PC-9 (cell line): ENCODE measurements at regions of chr12 and their contacts with region 1.

Region 1: DNA sequence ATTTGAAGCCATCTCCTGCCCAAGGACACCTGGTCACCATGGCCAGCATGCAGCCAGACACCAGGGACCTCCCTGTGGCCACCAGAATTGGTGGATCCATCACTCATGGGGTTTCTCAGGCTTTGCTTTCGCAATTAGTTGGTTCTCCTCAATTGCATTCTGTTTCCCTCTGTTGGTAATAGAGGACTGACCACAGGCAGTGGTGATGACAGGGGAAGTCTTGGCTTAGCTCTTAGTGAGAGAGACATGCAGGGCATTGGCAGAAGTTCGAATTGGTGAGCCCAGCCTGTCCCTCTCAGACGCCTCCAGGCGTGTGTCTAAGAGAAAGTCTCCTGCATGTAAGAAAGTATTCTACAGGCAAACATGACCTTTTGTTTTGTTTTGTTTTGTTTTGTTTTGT is 21.3 kb downstream of the HCAR2 start:
- DNase-seq: peak in 1 of 2 experiments; percentile 40
- H3K4me3 ChIP-seq: no peak overlapping the region
- H3K27ac ChIP-seq: no peak overlapping the region
- H3K4me1 ChIP-seq: peaks cover 42% of the 10 kb centered on the region
- H3K27me3 ChIP-seq: no peaks in the 10 kb centered on the region
- CTCF ChIP-seq: no peak

Region 2: DNA sequence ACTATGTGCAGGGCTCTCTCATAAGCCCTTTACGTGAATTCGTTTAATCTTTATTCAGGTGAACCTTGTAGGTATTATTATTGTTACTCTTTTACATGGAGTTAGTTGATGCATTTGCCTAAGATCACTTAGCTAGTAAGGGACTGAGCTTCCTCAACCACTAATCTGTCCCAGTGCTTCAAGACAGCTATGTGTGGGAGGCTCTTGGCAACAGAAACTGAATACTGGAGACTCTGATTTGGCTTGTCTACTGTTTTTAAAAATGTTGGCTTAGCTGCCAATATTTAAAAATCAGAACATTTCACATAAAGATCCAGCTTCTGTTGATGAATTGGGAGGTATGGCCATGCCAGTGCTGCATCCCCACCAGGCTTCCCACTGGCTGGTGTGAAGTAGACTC is 148.0 kb before region 1 on chr12:
- CTCF ChIA-PET with region 1: no interaction called
- POLR2A ChIA-PET with region 1: no interaction called
- intact Hi-C with region 1: no loop called
- DNase-seq: no peak
- H3K4me3 ChIP-seq: no peak overlapping the region
- H3K27ac ChIP-seq: no peak overlapping the region
- H3K4me1 ChIP-seq: no peaks in the 10 kb centered on the region
- H3K27me3 ChIP-seq: no peaks in the 10 kb centered on the region
- CTCF ChIP-seq: no peak

Region 3: GRCh38 chr12:122642009-122642408 is 39.8 kb before region 1 on chr12:
- CTCF ChIA-PET with region 1: interaction called, 3 read pairs
- POLR2A ChIA-PET with region 1: no interaction called
- intact Hi-C with region 1: loop called (anchors 1 kb)
- DNase-seq: no peak
- H3K4me3 ChIP-seq: no peak overlapping the region
- H3K27ac ChIP-seq: no peak overlapping the region
- H3K4me1 ChIP-seq: no peaks in the 10 kb centered on the region
- H3K27me3 ChIP-seq: no peaks in the 10 kb centered on the region
- CTCF ChIP-seq: no peak

Region 4: GRCh38 chr12:122726080-122726558 is 44.3 kb after region 1 on chr12:
- CTCF ChIA-PET with region 1: no interaction called
- POLR2A ChIA-PET with region 1: interaction called, 3 read pairs
- intact Hi-C with region 1: loop called (anchors 5 kb)
- DNase-seq: peak; percentile 65 to 90
- H3K4me3 ChIP-seq: peak overlapping the region; percentile 77
- H3K27ac ChIP-seq: peak overlapping the region; percentile 84
- H3K4me1 ChIP-seq: peaks cover 34% of the 10 kb centered on the region
- H3K27me3 ChIP-seq: no peaks in the 10 kb centered on the region
- CTCF ChIP-seq: no peak

Region 5: GRCh38 chr12:122999196-122999950 is 317.6 kb after region 1 on chr12:
- CTCF ChIA-PET with region 1: no interaction called
- POLR2A ChIA-PET with region 1: no interaction called
- intact Hi-C with region 1: no loop called
- DNase-seq: no peak
- H3K4me3 ChIP-seq: no peak overlapping the region
- H3K27ac ChIP-seq: no peak overlapping the region
- H3K4me1 ChIP-seq: no peaks in the 10 kb centered on the region
- H3K27me3 ChIP-seq: no peaks in the 10 kb centered on the region
- CTCF ChIP-seq: no peak

Region 6: DNA sequence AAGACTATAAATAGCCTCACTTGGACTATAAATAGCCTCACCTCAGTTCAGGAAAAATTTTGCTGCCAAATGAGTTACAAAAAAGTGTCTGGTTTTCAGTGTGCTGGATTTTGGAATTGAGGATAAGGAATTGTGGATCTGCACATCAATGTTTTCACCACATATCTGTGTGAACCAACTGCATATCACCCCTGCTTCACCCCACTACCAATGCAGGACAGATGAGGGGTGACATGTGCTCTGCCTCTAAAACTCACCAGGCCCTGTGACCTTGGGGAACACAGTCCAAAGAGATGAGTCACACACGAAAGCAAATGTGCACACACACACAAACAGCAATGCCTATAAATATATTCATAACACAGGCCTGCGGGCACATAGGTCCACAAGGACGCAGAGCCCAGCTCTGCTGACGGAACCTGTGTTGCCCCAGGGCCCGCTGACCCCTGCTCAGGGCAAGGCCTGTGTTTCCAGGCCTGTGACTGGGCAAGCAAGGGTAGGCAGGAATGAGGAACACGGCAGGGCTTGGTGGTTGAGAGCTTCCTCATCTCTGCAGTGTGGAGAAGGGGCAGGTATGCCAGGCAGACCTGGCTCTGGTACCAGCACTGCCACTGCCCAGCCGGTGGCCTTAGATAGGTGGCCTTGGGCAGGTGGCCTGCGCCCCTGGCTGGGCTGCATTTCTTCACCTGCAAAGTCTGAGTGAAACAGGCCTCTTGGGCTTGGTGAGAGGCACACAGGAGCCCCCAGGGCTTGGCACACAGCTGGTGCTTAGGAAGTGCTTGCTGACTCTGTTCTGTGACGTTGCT is 381.1 kb after region 1 on chr12:
- CTCF ChIA-PET with region 1: no interaction called
- POLR2A ChIA-PET with region 1: no interaction called
- intact Hi-C with region 1: no loop called
- DNase-seq: peak; percentile 88 to 97
- H3K4me3 ChIP-seq: no peak overlapping the region
- H3K27ac ChIP-seq: peak overlapping the region; percentile 90
- H3K4me1 ChIP-seq: peaks cover 42% of the 10 kb centered on the region
- H3K27me3 ChIP-seq: no peaks in the 10 kb centered on the region
- CTCF ChIP-seq: no peak